Spleen (tissue), 13 donors: ENCODE measurements at regions of chr12 and their contacts with region 1.

Region 1: GRCh38 chr12:49842519-49843352 is at the start of gene BCDIN3D:
- DNase-seq: peak; percentile 99
- H3K4me3 ChIP-seq: peak within 1 kb of the TSS; percentile 62 to 88 (median 70)
- H3K27ac ChIP-seq: peak within 1 kb of the TSS; percentile 79 to 94 (median 89)
- H3K4me1 ChIP-seq: peaks cover 5 to 30% (median 17%) of the 10 kb centered on the region in 6 donors
- H3K27me3 ChIP-seq: no peaks in the 10 kb centered on the region
- CTCF ChIP-seq: peak in 1 of 11 experiments; percentile 30
- POLR2A ChIP-seq: peak in 1 of 3 donors; percentile 14
- total RNA-seq, gene BCDIN3D: 4.8 to 7.4 (median 5.3) TPM

Region 2: DNA sequence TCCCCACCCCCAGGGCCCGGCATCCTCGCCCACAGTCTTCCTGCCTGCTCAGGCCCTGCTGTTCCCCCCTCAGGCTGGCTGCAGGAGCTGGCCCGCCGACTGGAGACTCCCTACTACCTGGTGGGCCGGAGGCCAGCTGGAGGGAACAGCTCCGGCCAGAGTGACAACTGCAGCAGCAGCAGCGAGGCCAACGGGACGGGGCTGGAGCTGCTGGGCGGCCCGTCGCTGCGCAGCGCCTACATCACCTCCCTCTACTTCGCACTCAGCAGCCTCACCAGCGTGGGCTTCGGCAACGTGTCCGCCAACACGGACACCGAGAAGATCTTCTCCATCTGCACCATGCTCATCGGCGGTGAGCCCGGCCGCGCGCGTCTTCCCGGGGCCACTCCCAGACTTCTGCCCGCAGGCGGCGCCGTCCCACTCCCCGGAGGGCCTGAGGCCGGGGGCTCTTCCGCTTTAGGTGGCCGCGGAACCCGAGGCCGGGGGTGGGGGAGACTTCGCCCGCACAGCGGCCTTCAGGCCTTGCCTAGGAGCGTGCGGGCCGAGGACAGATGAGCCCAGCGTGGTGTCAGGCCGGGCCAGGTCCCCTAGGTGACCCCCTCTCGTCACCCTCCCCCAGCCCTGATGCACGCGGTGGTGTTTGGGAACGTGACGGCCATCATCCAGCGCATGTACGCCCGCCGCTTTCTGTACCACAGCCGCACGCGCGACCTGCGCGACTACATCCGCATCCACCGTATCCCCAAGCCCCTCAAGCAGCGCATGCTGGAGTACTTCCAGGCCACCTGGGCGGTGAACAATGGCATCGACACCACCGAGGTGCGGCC is 293.7 kb before region 1 on chr12:
- intact Hi-C with region 1: no loop called
- DNase-seq: no peak
- H3K4me3 ChIP-seq: peak overlapping the region in 7 of 8 donors; percentile 28 to 66 (median 31)
- H3K27ac ChIP-seq: no peak overlapping the region
- H3K4me1 ChIP-seq: peaks cover 0 to 15% (median 13%) of the 10 kb centered on the region in 6 donors
- H3K27me3 ChIP-seq: peaks cover 0 to 66% (median 26%) of the 10 kb centered on the region in 7 donors
- CTCF ChIP-seq: peak in 5 of 11 experiments; percentile 39 to 52 (median 40)
- POLR2A ChIP-seq: no peak

Region 3: GRCh38 chr12:49776413-49776812 is 66.3 kb before region 1 on chr12:
- intact Hi-C with region 1: loop called (anchors 5 kb)
- DNase-seq: peak; percentile 83
- H3K4me3 ChIP-seq: peak overlapping the region in 1 of 8 donors; percentile 4
- H3K27ac ChIP-seq: no peak overlapping the region
- H3K4me1 ChIP-seq: peaks cover 0 to 22% (median 13%) of the 10 kb centered on the region in 6 donors
- H3K27me3 ChIP-seq: peaks cover 0 to 48% (median 10%) of the 10 kb centered on the region in 7 donors
- CTCF ChIP-seq: peak; percentile 49 to 87 (median 73)
- POLR2A ChIP-seq: no peak

Region 4: DNA sequence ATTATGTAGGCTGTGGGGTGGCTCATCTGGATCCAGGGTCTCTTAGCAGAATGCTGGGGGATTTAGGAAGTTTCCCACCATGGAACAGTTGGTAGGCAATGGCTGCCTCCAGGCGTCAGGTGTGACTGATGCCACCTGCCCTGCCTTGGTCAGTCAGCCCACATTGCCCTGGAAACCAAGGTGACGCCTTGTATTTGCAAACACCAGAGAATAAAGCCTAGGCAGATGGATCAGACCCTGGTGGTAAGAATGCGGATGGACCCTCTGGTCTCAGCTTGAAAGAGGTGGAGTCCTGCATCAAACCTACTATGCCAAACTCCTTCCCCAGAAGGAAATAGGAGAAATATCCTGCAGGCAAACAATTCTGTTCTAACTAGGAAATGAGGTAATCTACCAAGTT is 52.7 kb before region 1 on chr12:
- intact Hi-C with region 1: no loop called
- DNase-seq: peak; percentile 14
- H3K4me3 ChIP-seq: no peak overlapping the region
- H3K27ac ChIP-seq: no peak overlapping the region
- H3K4me1 ChIP-seq: peaks cover 0 to 2% (median 0%) of the 10 kb centered on the region in 6 donors
- H3K27me3 ChIP-seq: peaks cover 0 to 12% (median 0%) of the 10 kb centered on the region in 7 donors
- CTCF ChIP-seq: no peak
- POLR2A ChIP-seq: no peak